Heart right ventricle (tissue), 16 donors: ENCODE measurements at regions of chrX and their contacts with region 1.

Region 1: GRCh38 chrX:10615931-10616775 is 4.2 kb downstream of the MID1 start:
- DNase-seq: peak; percentile 11 to 38
- ATAC-seq: peak in 5 of 8 donors; percentile 45 to 73 (median 55)
- H3K4me3 ChIP-seq: peak overlapping the region in 5 of 10 donors; percentile 10 to 68 (median 28)
- H3K27ac ChIP-seq: peak overlapping the region in 2 of 10 donors; percentile 15 to 22
- H3K4me1 ChIP-seq: peaks cover 0 to 10% (median 0%) of the 10 kb centered on the region in 9 donors
- H3K27me3 ChIP-seq: peaks cover 0 to 70% (median 0%) of the 10 kb centered on the region in 7 donors
- CTCF ChIP-seq: peak; percentile 31 to 75 (median 60)

Region 2: GRCh38 chrX:10199212-10199611 is 416.9 kb before region 1 on chrX:
- intact Hi-C with region 1: loop called in 5 of 10 experiments (anchors 5 to 10 kb)
- DNase-seq: peak in 1 of 2 donors; percentile 20
- ATAC-seq: peak in 5 of 8 donors; percentile 26 to 58 (median 52)
- H3K4me3 ChIP-seq: no peak overlapping the region
- H3K27ac ChIP-seq: peak overlapping the region in 7 of 10 donors; percentile 4 to 82 (median 37)
- H3K4me1 ChIP-seq: peaks cover 0 to 9% (median 0%) of the 10 kb centered on the region in 9 donors
- H3K27me3 ChIP-seq: peaks cover 0 to 19% (median 0%) of the 10 kb centered on the region in 7 donors
- CTCF ChIP-seq: no peak

Region 3: GRCh38 chrX:10469900-10470408 is 146.2 kb before region 1 on chrX:
- intact Hi-C with region 1: loop called in 1 of 10 experiments (anchors 10 kb)
- DNase-seq: no peak
- ATAC-seq: no peak
- H3K4me3 ChIP-seq: no peak overlapping the region
- H3K27ac ChIP-seq: no peak overlapping the region
- H3K4me1 ChIP-seq: peaks cover 0 to 9% (median 5%) of the 10 kb centered on the region in 9 donors
- H3K27me3 ChIP-seq: no peaks in the 10 kb centered on the region
- CTCF ChIP-seq: no peak

Region 4: GRCh38 chrX:10554612-10555270 is 61.4 kb before region 1 on chrX:
- intact Hi-C with region 1: loop called in 1 of 10 experiments (anchors 10 kb)
- DNase-seq: peak in 1 of 2 donors; percentile 23
- ATAC-seq: peak in 7 of 8 donors; percentile 57 to 96 (median 84)
- H3K4me3 ChIP-seq: no peak overlapping the region
- H3K27ac ChIP-seq: peak overlapping the region in 8 of 10 donors; percentile 15 to 72 (median 56)
- H3K4me1 ChIP-seq: peaks cover 0 to 23% (median 3%) of the 10 kb centered on the region in 9 donors
- H3K27me3 ChIP-seq: no peaks in the 10 kb centered on the region
- CTCF ChIP-seq: no peak